ENCODE measurements at regions of chr5 and their contacts with region 1.

Region 1: DNA sequence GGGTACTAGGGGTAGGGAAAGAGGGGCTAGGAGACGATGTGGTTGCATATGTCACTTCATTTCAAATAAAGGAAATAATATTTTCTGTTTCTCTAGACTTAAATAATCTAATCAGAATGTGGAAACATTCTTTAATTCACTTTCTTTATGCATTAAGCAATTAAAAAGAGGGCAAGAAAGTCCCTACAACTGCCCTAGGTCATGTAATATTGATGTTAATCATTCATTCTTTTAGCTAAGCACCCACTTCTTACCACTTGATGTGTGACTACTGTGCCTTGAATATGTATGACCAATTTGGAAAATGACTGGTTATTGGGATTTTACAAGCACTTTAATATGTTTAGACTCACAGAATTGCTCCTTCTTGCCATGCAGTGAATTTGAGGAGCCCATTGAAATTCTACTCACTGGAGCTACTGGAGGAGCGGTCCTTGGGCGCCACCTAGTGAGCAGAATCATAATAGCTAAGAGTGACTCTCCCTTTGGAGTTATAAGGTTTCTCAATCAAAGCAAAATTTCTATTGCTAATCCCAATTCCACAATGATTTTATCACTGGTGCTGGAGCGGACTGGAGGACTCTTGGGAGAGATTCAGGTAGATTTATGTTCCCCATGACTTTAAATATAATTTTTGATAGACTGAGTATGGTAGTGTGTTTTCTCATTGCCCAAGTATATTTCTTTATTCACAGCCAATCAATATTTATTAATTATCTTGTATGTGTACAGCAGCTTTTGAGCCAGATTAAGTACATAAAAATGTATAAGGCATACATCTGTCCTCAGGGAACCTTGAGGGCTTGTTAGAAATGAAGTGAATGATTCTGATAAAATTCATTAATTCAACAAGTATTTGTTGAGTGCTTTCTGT is 225.1 kb downstream of the ADGRV1 start:
- H3K4me3 Mint-ChIP-seq: no peak overlapping the region
- H3K27ac Mint-ChIP-seq: no peak overlapping the region
- H3K4me1 Mint-ChIP-seq: no peaks in the 10 kb centered on the region
- H3K27me3 Mint-ChIP-seq: no peaks in the 10 kb centered on the region

Region 2: GRCh38 chr5:90438100-90438499 is 345.6 kb before region 1 on chr5:
- intact Hi-C with region 1: loop called (anchors 1 kb)
- H3K4me3 Mint-ChIP-seq: no peak overlapping the region
- H3K27ac Mint-ChIP-seq: no peak overlapping the region
- H3K4me1 Mint-ChIP-seq: peaks cover 5% of the 10 kb centered on the region
- H3K27me3 Mint-ChIP-seq: no peaks in the 10 kb centered on the region

Region 3: GRCh38 chr5:90606539-90606938 is 177.2 kb before region 1 on chr5:
- intact Hi-C with region 1: loop called (anchors 5 kb)
- H3K4me3 Mint-ChIP-seq: no peak overlapping the region
- H3K27ac Mint-ChIP-seq: no peak overlapping the region
- H3K4me1 Mint-ChIP-seq: peaks cover 5% of the 10 kb centered on the region
- H3K27me3 Mint-ChIP-seq: peaks cover 3% of the 10 kb centered on the region

Region 4: DNA sequence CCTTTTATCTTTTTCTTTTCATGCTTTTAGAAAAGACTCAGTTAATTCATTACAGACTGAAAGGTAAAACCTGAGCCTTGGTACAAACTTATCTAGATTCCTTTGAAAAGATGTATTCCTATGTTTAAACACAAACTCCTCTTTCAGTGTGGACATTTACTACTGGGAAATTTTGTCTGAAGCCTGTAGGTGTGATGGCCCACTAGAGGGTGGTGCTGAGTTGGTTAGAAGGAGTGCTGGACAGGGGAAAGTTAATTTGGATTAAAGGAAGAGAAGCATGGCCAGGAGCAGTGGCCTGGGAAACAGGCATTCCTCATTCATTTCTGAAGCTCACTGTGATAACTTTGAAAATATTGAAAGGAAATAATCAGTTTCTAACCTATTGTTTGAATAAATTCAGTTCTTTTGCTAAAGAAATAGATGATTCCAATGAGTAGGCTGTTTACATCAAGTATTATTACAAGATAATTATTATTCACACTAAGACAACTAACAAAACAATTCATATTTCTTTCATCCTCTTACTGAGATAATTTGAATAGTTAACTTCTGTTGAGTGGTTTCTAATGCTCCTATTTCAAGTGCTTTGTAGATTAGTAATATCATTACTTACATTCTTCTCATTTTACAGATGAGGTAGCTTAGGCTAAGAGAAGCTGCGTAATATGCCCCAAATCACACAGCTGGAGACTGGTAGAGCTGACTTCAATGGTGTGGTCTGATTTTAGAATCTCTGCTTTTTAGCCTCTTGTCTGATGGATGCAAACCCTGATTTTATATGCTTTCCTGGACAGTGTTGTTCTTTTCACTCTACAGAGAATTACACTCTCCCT is 74.2 kb before region 1 on chr5:
- intact Hi-C with region 1: loop called (anchors 1 kb)
- H3K4me3 Mint-ChIP-seq: no peak overlapping the region
- H3K27ac Mint-ChIP-seq: no peak overlapping the region
- H3K4me1 Mint-ChIP-seq: no peaks in the 10 kb centered on the region
- H3K27me3 Mint-ChIP-seq: no peaks in the 10 kb centered on the region

Region 5: DNA sequence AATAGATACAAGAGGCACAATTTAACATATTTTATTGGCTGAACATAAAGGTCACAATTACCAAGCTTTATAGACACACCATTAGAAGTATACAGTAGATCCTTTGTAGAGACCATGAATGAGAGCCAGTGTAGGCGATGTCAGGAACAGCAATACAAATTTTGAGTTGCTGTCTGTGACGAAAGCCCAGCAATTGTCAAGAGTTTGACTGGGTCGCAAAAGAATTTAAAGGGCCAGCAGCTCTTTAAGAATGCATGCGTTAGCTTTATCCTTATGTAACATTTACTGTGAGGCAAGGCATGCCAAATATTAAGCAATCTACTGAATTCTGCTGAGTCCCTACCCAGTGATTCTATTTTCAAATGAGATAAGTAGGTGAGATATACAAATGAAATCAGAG is 362.5 kb after region 1 on chr5:
- intact Hi-C with region 1: no loop called
- H3K4me3 Mint-ChIP-seq: no peak overlapping the region
- H3K27ac Mint-ChIP-seq: no peak overlapping the region
- H3K4me1 Mint-ChIP-seq: peaks cover 34% of the 10 kb centered on the region
- H3K27me3 Mint-ChIP-seq: no peaks in the 10 kb centered on the region

Measured in dendritic cell treated with granulocyte-macrophage colony-stimulating factor and Interleukin-4, amounts not matched to agents 40 ng/mL and 50 ng/mL, for 4 days (primary cell).